IMR-90 (cell line): ENCODE measurements at regions of chr5 and their contacts with region 1.

Region 1: DNA sequence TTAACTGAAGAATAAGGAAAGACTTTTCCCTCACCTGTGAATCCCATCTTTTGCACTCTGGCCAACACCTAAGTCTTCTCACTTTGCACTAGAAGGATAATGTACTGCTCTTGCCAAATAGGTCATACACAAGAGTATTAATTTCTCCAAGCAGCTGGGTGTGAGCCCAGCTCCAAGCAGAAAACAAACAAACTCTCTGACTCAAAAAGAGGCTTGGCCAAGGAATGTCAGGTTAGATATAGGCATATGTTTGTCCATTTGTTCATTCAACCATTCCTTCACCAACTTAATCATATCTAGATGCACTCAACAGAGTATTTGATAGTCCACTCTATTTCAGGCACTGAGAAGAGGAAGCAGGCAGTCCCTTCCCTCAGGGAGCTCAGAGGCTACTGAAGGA is 84.4 kb downstream of the HTR4 start:
- DNase-seq: no peak
- ATAC-seq: no peak
- H3K4me3 ChIP-seq: no peak overlapping the region
- H3K27ac ChIP-seq: no peak overlapping the region
- H3K4me1 ChIP-seq: no peaks in the 10 kb centered on the region
- H3K27me3 ChIP-seq: no peaks in the 10 kb centered on the region
- CTCF ChIP-seq: no peak
- POLR2A ChIP-seq: no peak
- RAD21 ChIP-seq: no peak

Region 2: GRCh38 chr5:148443998-148444397 is 126.0 kb before region 1 on chr5:
- CTCF ChIA-PET with region 1: no interaction called
- POLR2A ChIA-PET with region 1: no interaction called
- dilution Hi-C with region 1: no loop called
- in situ Hi-C with region 1: no loop called
- intact Hi-C with region 1: no loop called
- DNase-seq: peak; percentile 78
- ATAC-seq: peak; percentile 89
- H3K4me3 ChIP-seq: no peak overlapping the region
- H3K27ac ChIP-seq: no peak overlapping the region
- H3K4me1 ChIP-seq: no peaks in the 10 kb centered on the region
- H3K27me3 ChIP-seq: peaks cover 3% of the 10 kb centered on the region; the same call in 1 of the 2 replicates
- CTCF ChIP-seq: peak; percentile 77
- POLR2A ChIP-seq: no peak
- RAD21 ChIP-seq: peak; percentile 68

Region 3: DNA sequence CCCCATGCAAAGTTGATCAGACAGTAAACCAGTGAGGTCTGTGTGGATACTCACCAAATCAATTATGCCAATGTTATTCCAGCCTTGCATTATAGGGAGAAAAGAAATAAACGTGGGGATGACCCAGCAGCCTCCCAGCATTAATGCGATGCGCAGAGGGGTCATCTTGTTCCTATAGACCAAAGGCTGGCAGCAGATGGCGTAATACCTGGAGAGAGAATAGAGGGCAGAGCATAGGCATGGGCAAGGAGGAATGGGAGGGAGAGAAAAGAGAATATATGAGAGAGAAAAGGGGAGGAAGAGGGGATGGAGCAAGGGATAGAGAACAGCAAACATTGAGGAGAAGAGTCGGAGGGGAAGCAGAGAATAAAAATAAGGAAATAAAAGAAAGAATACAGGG is 46.8 kb before region 1 on chr5:
- CTCF ChIA-PET with region 1: no interaction called
- POLR2A ChIA-PET with region 1: no interaction called
- dilution Hi-C with region 1: no loop called
- in situ Hi-C with region 1: no loop called
- intact Hi-C with region 1: loop called (anchors 5 kb)
- DNase-seq: no peak
- ATAC-seq: no peak
- H3K4me3 ChIP-seq: no peak overlapping the region
- H3K27ac ChIP-seq: no peak overlapping the region
- H3K4me1 ChIP-seq: no peaks in the 10 kb centered on the region
- H3K27me3 ChIP-seq: no peaks in the 10 kb centered on the region; the same call in 1 of the 2 replicates
- CTCF ChIP-seq: no peak
- POLR2A ChIP-seq: no peak
- RAD21 ChIP-seq: no peak

Region 4: GRCh38 chr5:148535190-148535589 is 34.8 kb before region 1 on chr5:
- CTCF ChIA-PET with region 1: no interaction called
- POLR2A ChIA-PET with region 1: no interaction called
- dilution Hi-C with region 1: no loop called
- in situ Hi-C with region 1: no loop called
- intact Hi-C with region 1: no loop called
- DNase-seq: no peak
- ATAC-seq: no peak
- H3K4me3 ChIP-seq: no peak overlapping the region
- H3K27ac ChIP-seq: no peak overlapping the region
- H3K4me1 ChIP-seq: no peaks in the 10 kb centered on the region
- H3K27me3 ChIP-seq: no peaks in the 10 kb centered on the region
- CTCF ChIP-seq: no peak
- POLR2A ChIP-seq: no peak
- RAD21 ChIP-seq: no peak